ENCODE measurements at regions of chr2 and their contacts with region 1.

Region 1: DNA sequence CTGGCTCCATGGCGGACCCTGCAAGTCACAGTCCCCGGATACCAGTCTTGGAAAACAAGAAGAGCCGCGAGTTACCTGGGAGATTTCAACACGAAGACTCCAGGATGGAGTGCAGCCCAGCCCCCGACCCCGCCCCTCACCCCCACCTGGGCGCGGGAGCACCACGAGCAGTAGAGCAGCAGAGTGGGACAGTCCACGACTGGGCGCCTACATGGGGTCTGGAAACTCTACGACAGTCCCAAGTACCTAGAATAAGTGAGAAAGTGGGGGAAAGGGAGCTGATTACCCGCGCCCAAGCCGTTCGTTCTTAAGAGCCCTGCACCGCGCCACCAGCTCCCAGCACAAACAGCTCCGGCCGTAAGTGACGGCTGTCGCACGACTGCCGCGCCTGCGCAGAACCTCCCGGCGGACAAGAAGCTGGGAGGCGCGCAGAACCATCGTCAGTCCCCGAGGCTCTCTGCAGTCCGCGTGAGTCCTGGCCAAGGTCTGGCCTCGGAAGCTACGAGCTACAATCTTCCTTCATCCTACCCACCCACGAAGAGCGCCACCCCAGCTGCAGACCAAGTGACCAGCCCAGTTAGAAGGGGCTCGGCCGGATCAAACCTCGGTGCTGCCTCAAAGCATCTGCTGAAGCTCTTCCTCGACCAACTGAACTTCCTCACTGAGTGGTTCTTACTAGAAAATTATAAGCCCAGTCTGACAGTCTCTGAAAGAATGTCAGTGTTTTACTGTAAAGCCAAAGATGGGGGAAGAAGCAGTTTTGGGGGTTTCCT is at the start of gene DPY30:
- DNase-seq: peak; percentile 91
- H3K4me3 Mint-ChIP-seq: peak within 1 kb of the TSS; percentile 88
- H3K27ac Mint-ChIP-seq: peak within 1 kb of the TSS; percentile 83
- H3K4me1 Mint-ChIP-seq: no peaks in the 10 kb centered on the region
- H3K27me3 Mint-ChIP-seq: no peaks in the 10 kb centered on the region
- CTCF ChIP-seq: no peak
- total RNA-seq, gene DPY30: 52.1 and 54.7 TPM in 2 replicates

Region 2: DNA sequence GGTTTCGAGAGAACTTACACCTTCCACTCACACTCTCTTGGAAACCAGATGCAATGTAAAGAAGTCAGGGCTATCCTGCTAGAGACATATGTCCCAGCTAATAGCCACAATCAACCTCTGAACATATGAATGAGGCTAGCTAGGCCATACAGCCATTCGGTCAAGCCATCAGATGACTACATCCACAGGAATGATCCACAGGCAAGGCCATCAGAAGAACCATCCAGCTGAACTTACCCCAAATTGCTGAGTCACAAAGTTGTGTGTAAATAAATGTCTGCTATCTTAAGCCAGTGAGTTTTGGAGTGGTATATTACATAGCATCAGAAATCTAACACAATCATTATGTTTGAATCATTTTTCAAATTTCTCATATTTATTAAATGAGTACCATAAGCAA is 18.5 kb after region 1 on chr2:
- CTCF ChIA-PET with region 1: interaction called, 4 read pairs
- POLR2A ChIA-PET with region 1: interaction called, 129 read pairs
- intact Hi-C with region 1: no loop called
- DNase-seq: no peak
- H3K4me3 Mint-ChIP-seq: no peak overlapping the region
- H3K27ac Mint-ChIP-seq: no peak overlapping the region
- H3K4me1 Mint-ChIP-seq: peaks cover 9% of the 10 kb centered on the region
- H3K27me3 Mint-ChIP-seq: no peaks in the 10 kb centered on the region
- CTCF ChIP-seq: no peak

Region 3: GRCh38 chr2:32063310-32064161 is 23.9 kb after region 1 on chr2 and contains the start of gene SPAST:
- CTCF ChIA-PET with region 1: interaction called, 4 read pairs
- POLR2A ChIA-PET with region 1: interaction called, 129 read pairs
- intact Hi-C with region 1: no loop called
- DNase-seq: peak; percentile 97
- H3K4me3 Mint-ChIP-seq: peak within 1 kb of the TSS; percentile 98
- H3K27ac Mint-ChIP-seq: peak within 1 kb of the TSS; percentile 94
- H3K4me1 Mint-ChIP-seq: peaks cover 16% of the 10 kb centered on the region
- H3K27me3 Mint-ChIP-seq: no peaks in the 10 kb centered on the region
- CTCF ChIP-seq: peak; percentile 18
- total RNA-seq, gene SPAST: 20.4 and 23.8 TPM in 2 replicates

Measured in MCF 10A (cell line).